Mammary epithelial cell (primary cell): ENCODE measurements at regions of chr1 and their contacts with region 1.

Region 1: DNA sequence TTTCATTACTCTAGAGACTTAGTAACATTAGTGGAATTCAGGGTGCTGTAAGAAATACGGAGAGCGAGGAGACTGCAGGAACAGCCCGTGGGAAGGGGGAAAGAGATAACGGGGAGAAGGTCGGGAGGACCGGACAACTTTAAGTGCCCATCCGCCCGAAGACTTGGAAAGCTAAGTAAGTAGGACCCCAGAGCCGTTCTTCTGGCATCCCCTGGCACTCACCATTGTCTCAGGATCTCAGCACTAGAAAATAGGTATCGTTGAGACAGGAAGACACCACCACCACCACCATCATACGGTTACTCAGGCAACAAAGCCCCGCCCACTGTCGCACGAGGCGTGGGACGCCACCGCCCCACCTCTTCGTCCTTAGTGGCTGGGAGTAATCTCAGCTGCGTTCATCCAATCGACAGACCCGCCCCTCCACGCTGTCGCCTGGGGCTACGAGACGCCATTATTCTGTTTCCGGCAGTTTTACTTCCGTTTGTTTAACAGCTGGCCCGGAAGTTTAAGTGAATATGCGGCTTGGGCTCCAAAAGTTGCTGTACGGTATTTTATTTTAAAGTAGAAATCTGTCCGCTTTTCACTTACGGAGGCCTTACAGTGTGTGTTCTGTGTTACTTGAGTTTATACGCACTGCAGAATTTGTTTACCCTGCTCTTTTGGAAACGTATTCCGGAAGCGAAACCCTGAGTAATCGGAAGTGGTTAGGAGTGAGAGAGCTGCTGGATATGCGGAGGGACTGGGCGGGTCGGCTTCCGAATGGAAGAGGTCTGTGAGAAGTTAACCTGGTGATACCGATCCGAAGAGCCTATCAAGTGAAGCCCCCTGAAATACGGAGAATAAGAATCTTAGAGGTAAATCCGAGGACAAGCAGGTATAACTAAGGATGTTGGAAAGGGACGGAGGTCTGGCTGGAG is at the starts of genes BLZF1 and NME7:
- DNase-seq: peak; percentile 98
- H3K4me3 ChIP-seq: peak within 1 kb of the TSS; percentile 74 to 98 (median 87)
- H3K27ac ChIP-seq: peak within 1 kb of the TSS; percentile 98
- H3K4me1 ChIP-seq: peaks cover 46% of the 10 kb centered on the region
- H3K27me3 ChIP-seq: no peaks in the 10 kb centered on the region
- CTCF ChIP-seq: no peak
- total RNA-seq, gene BLZF1: 36.5 to 48.3 TPM
- total RNA-seq, gene NME7: 26.5 to 35.6 TPM

Region 2: DNA sequence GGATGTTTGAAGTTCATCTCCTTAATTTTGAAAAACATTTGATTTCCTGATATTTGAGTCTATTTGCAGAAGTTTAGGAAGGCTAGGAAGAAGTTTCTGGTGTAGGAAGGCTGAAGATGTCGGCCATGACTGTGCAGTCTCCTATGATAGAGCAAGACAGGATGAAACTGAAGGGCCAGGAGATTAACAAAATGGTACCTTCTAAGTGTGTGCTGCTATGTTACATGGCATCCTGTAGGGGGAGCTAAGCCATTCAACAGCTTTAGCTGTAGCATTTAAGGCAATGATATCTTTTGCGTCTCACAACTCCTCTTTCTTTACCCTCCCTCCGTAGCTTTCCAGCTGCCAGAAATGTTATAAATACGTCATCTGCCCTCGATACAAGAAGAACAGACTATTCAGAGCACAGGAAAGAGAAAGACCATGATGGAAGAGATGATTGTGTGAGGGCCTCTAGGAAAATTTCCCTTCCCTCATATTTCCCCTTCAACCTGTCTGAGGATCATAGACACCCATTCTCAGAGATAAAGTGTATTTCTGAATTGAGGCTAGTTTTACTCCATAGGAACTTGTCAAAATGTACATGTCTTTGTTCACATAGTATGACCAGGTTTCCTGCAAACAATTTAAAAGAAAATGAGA is 730.3 kb before region 1 on chr1:
- CTCF ChIA-PET with region 1: interaction called, 4 read pairs
- dilution Hi-C with region 1: no loop called
- in situ Hi-C with region 1: no loop called
- intact Hi-C with region 1: loop called (anchors 5 kb)
- DNase-seq: peak; percentile 39
- H3K4me3 ChIP-seq: no peak overlapping the region
- H3K27ac ChIP-seq: peak overlapping the region; percentile 95
- H3K4me1 ChIP-seq: peaks cover 26% of the 10 kb centered on the region
- H3K27me3 ChIP-seq: no peaks in the 10 kb centered on the region
- CTCF ChIP-seq: peak; percentile 79 to 84

Region 3: GRCh38 chr1:169106095-169106920 is 261.4 kb before region 1 on chr1 and contains the start of gene ATP1B1:
- CTCF ChIA-PET with region 1: no interaction called
- dilution Hi-C with region 1: no loop called
- in situ Hi-C with region 1: loop called in 1 of 2 experiments (anchors 25 kb)
- intact Hi-C with region 1: loop called (anchors 2 kb)
- DNase-seq: peak; percentile 88
- H3K4me3 ChIP-seq: peak within 1 kb of the TSS; percentile 84 to 89 (median 88)
- H3K27ac ChIP-seq: peak within 1 kb of the TSS; percentile 98
- H3K4me1 ChIP-seq: peaks cover 53% of the 10 kb centered on the region
- H3K27me3 ChIP-seq: no peaks in the 10 kb centered on the region
- CTCF ChIP-seq: peak in 1 of 2 donors; percentile 44
- total RNA-seq, gene ATP1B1: 53.2 to 117 TPM

Region 4: GRCh38 chr1:169485544-169486278 is 118.0 kb after region 1 on chr1 and contains the start of gene SLC19A2:
- CTCF ChIA-PET with region 1: no interaction called
- dilution Hi-C with region 1: no loop called
- in situ Hi-C with region 1: no loop called
- intact Hi-C with region 1: loop called (anchors 5 kb)
- DNase-seq: peak; percentile 99
- H3K4me3 ChIP-seq: peak within 1 kb of the TSS; percentile 73 to 80 (median 79)
- H3K27ac ChIP-seq: peak within 1 kb of the TSS; percentile 87
- H3K4me1 ChIP-seq: peaks cover 26% of the 10 kb centered on the region
- H3K27me3 ChIP-seq: no peaks in the 10 kb centered on the region
- CTCF ChIP-seq: peak in 1 of 2 donors; percentile 46
- total RNA-seq, gene SLC19A2: 6.3 to 11.0 TPM

Region 5: DNA sequence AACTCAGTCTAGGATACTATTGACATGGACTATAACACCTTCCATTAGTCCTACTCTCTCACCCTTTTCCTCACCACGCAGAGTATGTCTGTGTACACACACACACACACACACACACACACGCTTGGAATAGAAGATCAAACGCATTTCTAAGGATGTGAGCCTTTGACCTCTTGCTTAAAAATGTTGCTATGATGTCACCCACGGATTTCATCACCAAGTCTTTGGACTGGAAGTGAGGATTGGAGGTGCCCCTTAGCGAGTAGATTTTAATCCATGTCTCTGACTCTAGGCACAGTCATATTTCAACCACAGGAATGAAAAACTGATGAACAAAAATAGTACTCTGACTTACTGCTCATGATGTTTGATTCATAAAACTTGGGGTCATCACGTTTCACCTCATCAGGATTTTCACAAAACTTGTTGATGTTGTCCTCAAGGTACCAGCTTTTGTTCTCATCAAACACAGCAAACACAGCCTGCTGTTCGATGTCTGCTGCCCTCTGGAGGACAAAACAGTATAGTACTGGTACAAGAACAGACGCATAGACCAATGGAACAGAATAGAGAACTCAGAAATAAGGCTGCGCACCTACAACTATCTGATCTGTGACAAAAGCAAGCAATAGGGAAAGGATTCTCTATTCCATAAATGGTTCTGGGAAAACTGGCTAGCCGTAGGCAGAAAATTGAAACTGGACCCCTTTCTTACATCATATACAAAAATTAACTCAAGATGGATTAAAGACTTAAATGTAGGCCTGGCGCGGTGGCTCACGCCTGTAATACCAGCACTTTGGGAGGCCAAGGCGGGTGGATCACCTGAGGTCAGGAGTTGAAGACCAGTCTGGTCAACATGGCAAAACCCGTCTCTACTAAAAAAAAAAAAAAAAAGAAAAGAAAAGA is 178.6 kb after region 1 on chr1:
- CTCF ChIA-PET with region 1: no interaction called
- dilution Hi-C with region 1: no loop called
- in situ Hi-C with region 1: no loop called
- intact Hi-C with region 1: loop called (anchors 1 kb)
- DNase-seq: peak; percentile 59
- H3K4me3 ChIP-seq: no peak overlapping the region
- H3K27ac ChIP-seq: no peak overlapping the region
- H3K4me1 ChIP-seq: no peaks in the 10 kb centered on the region
- H3K27me3 ChIP-seq: no peaks in the 10 kb centered on the region
- CTCF ChIP-seq: peak; percentile 76 to 85